ENCODE measurements at regions of chr16 and their contacts with region 1.

Region 1: GRCh38 chr16:68085259-68086071 is at the start of gene NFATC3:
- DNase-seq: peak; percentile 99
- ATAC-seq: peak; percentile 70
- H3K4me3 Mint-ChIP-seq: peak within 1 kb of the TSS; percentile 99
- H3K27ac Mint-ChIP-seq: peak within 1 kb of the TSS; percentile 90
- H3K4me1 Mint-ChIP-seq: peaks cover 53% of the 10 kb centered on the region
- H3K27me3 Mint-ChIP-seq: no peaks in the 10 kb centered on the region
- total RNA-seq, gene NFATC3: 132 to 139 TPM

Region 2: GRCh38 chr16:67822511-67822910 is 263.0 kb before region 1 on chr16:
- POLR2A ChIA-PET with region 1: no interaction called
- DNase-seq: no peak
- ATAC-seq: no peak
- H3K4me3 Mint-ChIP-seq: no peak overlapping the region
- H3K27ac Mint-ChIP-seq: no peak overlapping the region
- H3K4me1 Mint-ChIP-seq: peaks cover 2% of the 10 kb centered on the region
- H3K27me3 Mint-ChIP-seq: no peaks in the 10 kb centered on the region

Region 3: DNA sequence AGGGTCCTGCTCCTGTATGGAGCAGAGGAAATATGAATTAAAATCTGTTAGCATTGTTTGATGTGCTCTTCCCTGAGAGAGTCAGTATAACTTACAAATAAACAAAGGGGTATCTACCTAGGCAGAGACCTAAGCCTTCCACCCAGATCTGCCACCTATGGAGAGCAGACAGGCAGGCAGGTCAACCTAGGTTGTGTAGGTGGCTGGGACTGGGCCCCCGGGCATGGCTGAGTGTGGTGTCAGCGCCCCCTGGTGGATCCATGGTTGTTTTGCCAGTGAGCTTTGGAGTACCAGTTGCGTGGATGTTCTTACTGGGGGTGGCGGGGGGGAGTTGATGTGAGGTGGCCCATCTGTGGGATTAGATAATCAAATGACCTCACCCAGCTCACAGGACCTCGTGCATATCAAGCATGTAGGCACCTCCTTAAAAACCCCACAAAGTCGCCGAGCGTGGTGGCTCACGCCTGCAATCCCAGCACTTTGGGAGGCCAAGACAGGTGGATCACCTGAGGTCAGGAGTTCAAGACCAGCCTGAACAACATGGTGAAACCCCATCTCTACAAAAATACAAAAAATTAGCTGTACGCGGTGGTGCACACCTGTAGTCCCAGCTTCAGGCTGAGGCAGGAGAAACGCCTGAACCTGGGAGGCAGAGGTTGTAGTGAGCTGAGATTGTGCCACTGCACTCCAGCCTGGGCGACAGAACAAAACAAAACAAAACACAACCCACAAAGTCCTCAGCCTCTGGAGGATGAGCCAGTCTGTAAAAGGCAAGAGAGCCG is 44.8 kb before region 1 on chr16:
- POLR2A ChIA-PET with region 1: no interaction called
- DNase-seq: peak; percentile 91
- ATAC-seq: peak; percentile 99
- H3K4me3 Mint-ChIP-seq: no peak overlapping the region
- H3K27ac Mint-ChIP-seq: peak overlapping the region; percentile 18
- H3K4me1 Mint-ChIP-seq: peaks cover 17% of the 10 kb centered on the region
- H3K27me3 Mint-ChIP-seq: no peaks in the 10 kb centered on the region

Region 4: DNA sequence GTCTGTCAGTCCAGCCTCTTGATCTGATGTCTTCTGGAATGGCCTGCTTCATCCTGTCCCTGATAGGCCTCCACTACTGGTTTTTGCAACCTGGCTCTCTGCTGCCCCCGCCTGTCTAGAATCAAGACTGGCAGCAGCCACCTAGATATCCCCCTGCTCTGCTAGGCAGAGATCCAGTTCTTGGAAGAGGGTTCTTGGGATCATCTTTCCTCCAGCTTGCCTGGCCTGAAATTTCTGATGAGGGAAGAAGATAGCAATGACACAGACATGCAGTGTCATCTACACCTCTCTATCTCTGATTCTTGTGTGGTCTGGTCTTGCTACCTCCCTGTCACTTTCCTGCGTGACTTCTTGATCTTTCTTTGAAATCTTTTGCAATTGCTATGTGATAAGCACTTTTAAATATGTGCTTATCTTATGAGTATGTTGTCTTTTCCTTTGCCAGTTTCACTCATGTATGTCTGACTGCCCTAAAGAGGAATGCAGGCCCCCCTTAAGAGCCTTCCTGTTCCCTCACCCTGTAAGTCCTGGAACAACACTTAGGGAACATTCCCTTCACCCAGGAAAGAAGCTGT is 20.6 kb before region 1 on chr16:
- POLR2A ChIA-PET with region 1: interaction called, 240 read pairs
- DNase-seq: peak; percentile 77
- ATAC-seq: peak; percentile 62
- H3K4me3 Mint-ChIP-seq: peak overlapping the region; percentile 45
- H3K27ac Mint-ChIP-seq: peak overlapping the region; percentile 95
- H3K4me1 Mint-ChIP-seq: peaks cover 65% of the 10 kb centered on the region
- H3K27me3 Mint-ChIP-seq: no peaks in the 10 kb centered on the region

Region 5: GRCh38 chr16:68074850-68075555 is 10.5 kb before region 1 on chr16:
- POLR2A ChIA-PET with region 1: interaction called, 240 read pairs
- DNase-seq: peak; percentile 91
- ATAC-seq: peak; percentile 67
- H3K4me3 Mint-ChIP-seq: peak overlapping the region; percentile 79
- H3K27ac Mint-ChIP-seq: peak overlapping the region; percentile 94
- H3K4me1 Mint-ChIP-seq: peaks cover 77% of the 10 kb centered on the region
- H3K27me3 Mint-ChIP-seq: no peaks in the 10 kb centered on the region

Region 6: GRCh38 chr16:68128577-68129305 is 43.3 kb after region 1 on chr16:
- POLR2A ChIA-PET with region 1: no interaction called
- DNase-seq: no peak
- ATAC-seq: no peak
- H3K4me3 Mint-ChIP-seq: no peak overlapping the region
- H3K27ac Mint-ChIP-seq: no peak overlapping the region
- H3K4me1 Mint-ChIP-seq: peaks cover 32% of the 10 kb centered on the region
- H3K27me3 Mint-ChIP-seq: no peaks in the 10 kb centered on the region

Measured in activated naive CD8-positive, alpha-beta T cell treated with anti-CD3 and anti-CD28 coated beads, Interleukin-2, amount 10 ng/mL, durations not matched to agents 7 days and 5 days (primary cell).